Uterus (tissue), 4 donors: ENCODE measurements at regions of chr1 and their contacts with region 1.

Region 1: DNA sequence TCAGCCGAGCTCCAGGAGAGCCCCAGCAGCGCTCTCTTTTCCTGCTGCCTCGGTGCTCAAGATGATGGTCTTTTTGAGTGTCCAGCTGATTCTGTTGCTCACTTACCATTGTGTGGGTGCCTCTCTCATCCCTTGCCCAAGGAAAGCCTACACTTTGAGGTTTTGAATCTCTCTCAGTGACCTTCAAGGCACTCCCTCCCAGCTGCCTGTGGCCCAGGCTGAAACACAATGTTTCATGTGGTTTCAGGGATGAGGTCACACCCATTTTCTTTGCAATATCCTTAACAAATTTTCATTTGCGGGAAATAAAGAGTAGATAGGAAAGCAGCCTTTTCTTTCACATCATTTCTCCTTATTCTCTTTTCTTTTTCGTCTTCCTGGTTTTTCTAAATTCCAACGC is 12.6 kb upstream of the MRPS14 start:
- DNase-seq: no peak
- H3K4me3 ChIP-seq: no peak overlapping the region
- H3K27ac ChIP-seq: no peak overlapping the region
- H3K4me1 ChIP-seq: no peaks in the 10 kb centered on the region
- H3K27me3 ChIP-seq: no peaks in the 10 kb centered on the region
- CTCF ChIP-seq: no peak
- POLR2A ChIP-seq: no peak

Region 2: GRCh38 chr1:174942547-174943255 is 93.2 kb before region 1 on chr1:
- intact Hi-C with region 1: no loop called
- DNase-seq: no peak
- H3K4me3 ChIP-seq: no peak overlapping the region
- H3K27ac ChIP-seq: no peak overlapping the region
- H3K4me1 ChIP-seq: no peaks in the 10 kb centered on the region
- H3K27me3 ChIP-seq: no peaks in the 10 kb centered on the region
- CTCF ChIP-seq: no peak
- POLR2A ChIP-seq: no peak

Region 3: GRCh38 chr1:174990382-174990999 is 45.4 kb before region 1 on chr1:
- intact Hi-C with region 1: no loop called
- DNase-seq: peak in 1 of 2 donors; percentile 33
- H3K4me3 ChIP-seq: peak overlapping the region; percentile 38 to 46
- H3K27ac ChIP-seq: peak overlapping the region; percentile 85 to 96
- H3K4me1 ChIP-seq: no peaks in the 10 kb centered on the region
- H3K27me3 ChIP-seq: no peaks in the 10 kb centered on the region
- CTCF ChIP-seq: no peak
- POLR2A ChIP-seq: no peak

Region 4: DNA sequence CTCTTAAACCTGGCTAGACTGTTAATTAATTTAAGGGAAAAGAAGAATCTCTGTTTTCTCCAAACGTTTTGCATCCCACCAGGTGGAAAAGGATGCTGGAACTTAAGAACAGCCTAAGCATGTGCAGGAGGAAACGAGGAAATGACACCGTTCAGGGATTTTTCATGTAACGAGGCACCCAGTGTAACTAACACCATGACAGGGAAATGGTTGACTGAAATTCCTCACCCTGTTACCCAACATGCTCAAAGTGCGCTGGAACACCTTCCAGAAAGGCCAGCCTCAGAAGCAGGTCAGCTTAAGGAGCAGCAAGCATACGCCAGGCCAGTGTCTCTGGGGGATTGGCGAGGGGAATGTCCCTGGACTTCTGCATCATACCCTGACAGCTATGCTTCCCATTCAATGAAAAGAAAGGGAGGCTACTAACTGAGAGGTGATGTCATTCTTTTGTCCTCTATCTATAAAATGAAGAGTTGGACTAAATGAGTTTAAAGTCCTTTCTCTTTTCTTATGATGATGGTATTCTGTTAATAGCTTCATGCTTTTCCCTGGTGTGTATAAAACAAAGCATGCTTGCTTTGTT is 53.4 kb after region 1 on chr1:
- intact Hi-C with region 1: no loop called
- DNase-seq: no peak
- H3K4me3 ChIP-seq: no peak overlapping the region
- H3K27ac ChIP-seq: no peak overlapping the region
- H3K4me1 ChIP-seq: no peaks in the 10 kb centered on the region
- H3K27me3 ChIP-seq: no peaks in the 10 kb centered on the region
- CTCF ChIP-seq: no peak
- POLR2A ChIP-seq: no peak

Region 5: GRCh38 chr1:175129997-175130648 is 94.3 kb after region 1 on chr1:
- intact Hi-C with region 1: loop called (anchors 10 kb)
- DNase-seq: no peak
- H3K4me3 ChIP-seq: no peak overlapping the region
- H3K27ac ChIP-seq: no peak overlapping the region
- H3K4me1 ChIP-seq: no peaks in the 10 kb centered on the region
- H3K27me3 ChIP-seq: no peaks in the 10 kb centered on the region
- CTCF ChIP-seq: no peak
- POLR2A ChIP-seq: no peak